Activated T-helper 2 cell treated with anti-CD3 and anti-CD28 coated beads, Interferon-gamma antibody, Interleukin-2, Interleukin-4, amounts not matched to agents 10 μg/mL and 5 μg/mL and 100 μg/mL, durations not matched to agents 14 hours and 24 hours and 36 hours (primary cell): ENCODE measurements at regions of chr4 and their contacts with region 1.

Region 1: DNA sequence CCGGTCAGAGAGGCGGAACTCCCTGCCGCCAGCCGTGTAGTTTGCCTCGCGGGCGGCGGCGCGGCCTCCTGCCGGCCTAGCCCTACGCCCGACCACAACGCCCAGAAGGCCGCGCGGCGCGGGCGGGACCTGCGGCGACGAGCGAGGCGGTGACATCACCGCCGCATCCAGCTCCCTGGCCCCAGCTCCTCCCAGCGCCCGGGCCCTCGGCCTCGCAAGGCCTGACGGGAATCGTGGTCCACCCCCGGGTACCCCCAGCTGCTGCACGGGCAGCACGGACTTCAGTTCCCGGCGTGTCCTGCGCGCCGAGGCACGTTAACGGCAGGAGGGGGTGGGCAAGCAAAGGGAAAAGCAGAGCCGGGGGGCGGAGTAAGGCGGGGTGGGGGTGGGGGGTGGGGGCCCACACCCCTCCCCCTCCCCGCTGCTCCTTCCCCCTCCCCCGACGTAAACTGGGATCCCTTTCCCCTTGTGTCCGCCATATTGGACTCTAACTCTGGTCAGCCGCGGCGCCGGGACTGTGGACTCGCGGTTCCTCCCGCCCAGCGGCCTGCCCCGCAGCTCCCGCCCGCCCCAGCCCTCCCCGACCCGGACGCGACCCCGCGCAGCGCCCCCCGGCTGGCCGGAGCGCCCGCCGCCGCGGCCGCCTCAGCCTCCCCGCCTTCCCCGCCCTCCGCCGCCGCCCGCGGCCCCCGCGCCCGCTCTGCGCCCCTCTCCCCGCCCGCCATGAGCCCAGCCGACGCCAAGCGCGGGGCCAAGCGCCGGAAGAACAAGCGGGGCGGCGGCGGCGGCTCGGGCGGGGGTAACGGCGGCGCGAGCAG is at the start of gene FAM193A:
- DNase-seq: peak; percentile 99
- H3K4me3 Mint-ChIP-seq: peak within 1 kb of the TSS; percentile 90
- H3K27ac Mint-ChIP-seq: peak within 1 kb of the TSS; percentile 93
- H3K4me1 Mint-ChIP-seq: peaks cover 10% of the 10 kb centered on the region
- H3K27me3 Mint-ChIP-seq: no peaks in the 10 kb centered on the region
- total RNA-seq, gene FAM193A: 30.8 and 31.2 TPM in 2 replicates

Region 2: DNA sequence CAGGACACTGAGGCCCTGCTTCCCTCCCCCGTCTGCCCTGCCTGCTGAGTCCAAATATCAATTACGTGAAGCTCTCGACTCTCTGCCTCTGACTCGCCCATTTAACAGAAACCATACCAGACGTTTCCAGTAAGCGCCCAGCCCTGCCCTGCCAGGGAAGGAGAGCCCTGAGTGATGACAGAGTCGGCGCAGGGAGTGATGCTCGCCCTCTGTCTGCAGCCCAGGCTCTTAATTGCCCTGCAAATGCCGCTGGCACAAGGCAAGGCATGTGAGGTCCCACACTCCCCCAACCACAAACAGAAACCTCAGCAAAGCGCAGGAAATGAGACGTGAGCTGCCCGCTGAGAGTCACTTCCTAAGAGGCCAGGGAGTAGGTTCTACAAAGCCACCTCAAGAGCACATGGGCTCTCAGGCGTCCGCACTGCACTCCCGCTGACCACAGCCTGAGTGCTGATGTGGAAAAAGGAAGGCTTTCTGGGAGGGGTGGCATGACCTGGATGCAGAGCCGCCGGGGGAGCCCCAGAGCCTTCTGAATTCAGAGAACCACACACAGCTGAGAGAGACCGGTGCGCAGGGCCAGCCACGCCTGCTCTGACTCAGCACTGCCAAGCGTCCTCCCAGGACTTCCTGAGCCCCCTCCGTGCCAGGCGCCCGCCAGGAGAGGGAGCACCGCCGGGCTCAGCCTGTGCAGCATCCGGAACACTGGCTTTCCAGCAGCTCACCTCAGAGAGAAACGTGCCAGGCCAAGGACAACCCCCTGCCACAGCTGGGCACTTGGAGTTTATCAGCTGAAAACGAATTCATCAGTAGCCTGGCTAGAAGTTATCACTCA is 123.3 kb before region 1 on chr4:
- intact Hi-C with region 1: loop called (anchors 1 kb)
- DNase-seq: peak; percentile 91
- H3K4me3 Mint-ChIP-seq: peak overlapping the region; percentile 74
- H3K27ac Mint-ChIP-seq: peak overlapping the region; percentile 96
- H3K4me1 Mint-ChIP-seq: peaks cover 57% of the 10 kb centered on the region
- H3K27me3 Mint-ChIP-seq: peaks cover 14% of the 10 kb centered on the region

Region 3: DNA sequence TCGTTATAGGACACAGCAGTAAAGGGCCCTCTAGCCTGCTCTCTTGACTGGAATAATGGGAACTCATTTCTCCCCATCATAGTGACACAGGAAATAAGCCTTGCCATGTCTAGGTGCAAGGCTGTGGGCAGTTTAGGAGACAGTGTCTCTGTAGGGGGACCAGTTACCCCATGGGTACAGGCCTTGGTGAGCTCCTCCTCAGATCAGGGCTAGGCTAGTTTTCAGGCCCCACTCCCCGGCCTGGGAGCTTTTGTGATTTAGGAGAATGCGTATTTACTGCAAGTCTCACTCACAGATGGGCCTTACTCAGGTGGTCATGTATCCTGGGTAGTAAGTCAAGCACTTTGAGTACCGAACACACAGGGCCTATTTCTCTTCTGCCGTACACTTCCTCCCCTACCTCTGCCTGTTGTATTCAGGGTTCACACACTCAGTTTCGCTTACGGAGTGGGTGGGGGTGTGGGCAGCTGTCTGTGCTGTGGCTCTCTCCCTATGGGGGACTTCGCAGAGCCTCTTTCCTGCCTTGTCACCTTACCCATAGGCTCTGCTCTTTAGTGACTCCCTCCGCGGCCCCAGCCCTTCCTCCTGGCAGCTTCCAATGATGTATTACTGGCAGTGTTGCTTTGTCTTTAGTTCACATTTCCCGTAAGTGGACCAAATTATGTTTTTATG is 34.3 kb after region 1 on chr4:
- intact Hi-C with region 1: loop called (anchors 5 kb)
- DNase-seq: peak; percentile 50
- H3K4me3 Mint-ChIP-seq: no peak overlapping the region
- H3K27ac Mint-ChIP-seq: peak overlapping the region; percentile 80
- H3K4me1 Mint-ChIP-seq: peaks cover 34% of the 10 kb centered on the region
- H3K27me3 Mint-ChIP-seq: no peaks in the 10 kb centered on the region

Region 4: DNA sequence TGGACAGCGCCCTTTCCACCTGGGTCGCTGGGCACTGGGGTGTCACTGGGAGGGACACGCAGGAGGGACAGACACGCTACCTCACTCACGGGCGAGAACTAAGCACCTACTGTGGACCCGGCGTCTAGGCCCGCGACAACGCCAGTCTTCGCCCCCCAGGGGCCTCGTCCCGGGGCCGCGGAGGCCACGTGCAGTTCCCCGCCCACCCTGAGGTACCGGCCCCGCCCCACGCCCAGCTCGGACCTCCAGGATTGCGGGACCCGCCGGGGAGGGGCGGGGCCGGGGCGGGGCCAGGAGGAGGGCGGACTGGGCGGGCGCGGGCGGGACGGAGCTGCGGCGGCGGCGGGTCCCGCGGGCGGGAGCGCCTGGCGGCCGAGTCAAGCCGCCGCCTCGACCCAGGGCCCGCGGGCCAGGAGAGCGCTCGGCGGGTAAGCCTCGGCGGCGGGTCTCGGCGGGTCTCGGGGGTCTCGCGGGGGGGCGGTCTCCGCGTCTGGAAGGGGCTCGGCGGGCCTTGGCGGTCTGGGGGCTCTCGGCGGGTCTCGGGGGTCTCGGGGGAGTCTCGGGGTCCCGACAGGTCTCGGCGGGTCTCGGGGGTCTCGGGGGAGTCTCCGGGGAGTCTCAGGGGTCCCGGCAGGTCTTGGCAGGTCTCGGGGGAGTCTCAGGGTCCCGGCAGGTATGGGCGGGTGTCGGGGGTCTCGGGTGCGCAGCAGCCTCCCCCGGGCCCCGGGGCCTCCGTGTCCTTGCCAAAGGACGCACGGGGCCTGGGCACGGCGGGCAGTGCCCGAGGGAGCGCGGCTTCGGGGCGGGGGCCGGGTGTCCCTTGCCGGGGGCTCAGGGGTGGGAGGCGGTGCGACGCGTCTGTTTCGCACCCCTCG is 256.5 kb after region 1 on chr4 and contains the start of gene SH3BP2:
- intact Hi-C with region 1: no loop called
- DNase-seq: no peak
- H3K4me3 Mint-ChIP-seq: peak within 1 kb of the TSS; percentile 85
- H3K27ac Mint-ChIP-seq: peak within 1 kb of the TSS; percentile 69
- H3K4me1 Mint-ChIP-seq: peaks cover 36% of the 10 kb centered on the region
- H3K27me3 Mint-ChIP-seq: no peaks in the 10 kb centered on the region
- total RNA-seq, gene SH3BP2: 64.3 and 72.7 TPM in 2 replicates